ENCODE measurements at regions of chr10 and their contacts with region 1.

Region 1: DNA sequence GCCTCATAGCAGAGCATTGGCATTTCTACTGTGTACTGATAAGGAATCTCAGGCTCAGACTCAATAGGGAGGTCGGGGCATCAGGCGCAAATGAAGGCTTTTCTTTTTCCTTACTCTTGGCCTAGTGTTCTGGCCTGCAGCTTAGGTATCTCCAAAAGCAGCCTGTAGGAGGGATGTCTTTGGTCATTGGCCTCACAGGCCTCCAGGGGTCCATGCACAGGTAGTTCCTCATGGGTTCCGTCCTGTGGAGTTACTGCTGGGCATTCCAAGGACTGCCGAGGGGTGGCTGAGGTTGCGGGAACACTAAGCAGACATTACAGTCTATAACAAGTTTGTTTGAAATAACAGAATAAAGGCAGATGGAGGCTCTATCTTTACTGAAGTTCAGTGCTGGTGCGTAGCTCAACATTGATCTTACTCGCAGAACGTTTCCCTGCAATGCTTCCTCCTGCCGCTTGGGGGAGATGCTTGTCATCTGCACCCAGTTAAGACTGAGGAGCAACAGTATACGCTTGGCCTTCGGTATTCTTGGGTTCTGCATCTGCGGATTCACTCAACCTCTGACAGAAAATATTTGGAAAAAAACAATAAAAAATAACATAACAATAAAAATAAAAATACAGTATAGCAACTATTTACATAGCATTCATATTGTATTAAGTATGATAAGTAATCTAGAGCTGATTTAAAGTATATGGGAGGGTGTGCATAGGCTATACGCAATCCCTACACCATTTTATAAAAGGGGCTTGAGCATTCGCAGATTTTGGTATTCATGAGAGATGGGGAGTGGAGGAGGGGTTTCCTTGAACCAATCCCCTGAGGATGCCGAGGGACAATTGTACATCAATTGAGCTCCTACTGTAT is 58.9 kb downstream of the SH2D4B start:
- DNase-seq: no peak
- H3K4me3 ChIP-seq: no peak overlapping the region
- H3K27me3 ChIP-seq: no peaks in the 10 kb centered on the region
- CTCF ChIP-seq: peak; percentile 80

Region 2: GRCh38 chr10:80561950-80562349 is 34.7 kb before region 1 on chr10:
- CTCF ChIA-PET with region 1: no interaction called
- POLR2A ChIA-PET with region 1: no interaction called
- DNase-seq: no peak
- H3K4me3 ChIP-seq: no peak overlapping the region
- H3K27me3 ChIP-seq: no peaks in the 10 kb centered on the region; the same call in 1 of the 2 replicates
- CTCF ChIP-seq: no peak

Region 3: GRCh38 chr10:80580638-80581468 is 15.8 kb before region 1 on chr10:
- CTCF ChIA-PET with region 1: interaction called, 12 read pairs
- POLR2A ChIA-PET with region 1: no interaction called
- DNase-seq: no peak
- H3K4me3 ChIP-seq: no peak overlapping the region
- H3K27me3 ChIP-seq: no peaks in the 10 kb centered on the region
- CTCF ChIP-seq: no peak

Region 4: GRCh38 chr10:80612261-80612660 is 15.6 kb after region 1 on chr10:
- CTCF ChIA-PET with region 1: interaction called, 12 read pairs
- POLR2A ChIA-PET with region 1: no interaction called
- DNase-seq: no peak
- H3K4me3 ChIP-seq: no peak overlapping the region
- H3K27me3 ChIP-seq: no peaks in the 10 kb centered on the region
- CTCF ChIP-seq: no peak